ENCODE measurements at regions of chr2 and their contacts with region 1.

Region 1: GRCh38 chr2:157443795-157444640 is at the start of gene CYTIP:
- DNase-seq: peak; percentile 82
- ATAC-seq: peak; percentile 44
- H3K4me3 Mint-ChIP-seq: peak within 1 kb of the TSS; percentile 93
- H3K27ac Mint-ChIP-seq: peak within 1 kb of the TSS; percentile 95
- H3K4me1 Mint-ChIP-seq: peaks cover 40% of the 10 kb centered on the region
- H3K27me3 Mint-ChIP-seq: no peaks in the 10 kb centered on the region
- total RNA-seq, gene CYTIP: 470 to 536 TPM

Region 2: DNA sequence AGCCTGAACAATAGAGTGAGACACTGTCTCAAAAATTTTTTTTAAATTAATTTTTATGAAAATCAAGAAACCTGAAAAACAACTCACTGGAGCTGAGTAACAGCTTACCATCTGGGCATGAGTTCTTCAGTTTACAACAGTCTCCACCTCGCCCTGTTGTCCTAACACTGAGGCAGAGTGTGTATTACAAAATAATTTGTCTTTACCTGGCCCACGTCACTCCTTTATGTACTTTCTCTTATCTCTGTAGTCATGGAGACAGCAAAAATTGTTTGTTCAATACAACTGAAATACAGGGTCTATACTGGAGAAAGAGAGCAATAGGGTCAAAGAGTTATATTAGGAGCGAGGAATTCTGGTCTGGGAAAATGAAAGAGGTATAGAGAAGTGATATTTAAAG is 48.2 kb before region 1 on chr2:
- CTCF ChIA-PET with region 1: no interaction called
- POLR2A ChIA-PET with region 1: no interaction called
- intact Hi-C with region 1: no loop called
- DNase-seq: no peak
- ATAC-seq: no peak
- H3K4me3 Mint-ChIP-seq: no peak overlapping the region
- H3K27ac Mint-ChIP-seq: no peak overlapping the region
- H3K4me1 Mint-ChIP-seq: peaks cover 7% of the 10 kb centered on the region
- H3K27me3 Mint-ChIP-seq: no peaks in the 10 kb centered on the region

Region 3: DNA sequence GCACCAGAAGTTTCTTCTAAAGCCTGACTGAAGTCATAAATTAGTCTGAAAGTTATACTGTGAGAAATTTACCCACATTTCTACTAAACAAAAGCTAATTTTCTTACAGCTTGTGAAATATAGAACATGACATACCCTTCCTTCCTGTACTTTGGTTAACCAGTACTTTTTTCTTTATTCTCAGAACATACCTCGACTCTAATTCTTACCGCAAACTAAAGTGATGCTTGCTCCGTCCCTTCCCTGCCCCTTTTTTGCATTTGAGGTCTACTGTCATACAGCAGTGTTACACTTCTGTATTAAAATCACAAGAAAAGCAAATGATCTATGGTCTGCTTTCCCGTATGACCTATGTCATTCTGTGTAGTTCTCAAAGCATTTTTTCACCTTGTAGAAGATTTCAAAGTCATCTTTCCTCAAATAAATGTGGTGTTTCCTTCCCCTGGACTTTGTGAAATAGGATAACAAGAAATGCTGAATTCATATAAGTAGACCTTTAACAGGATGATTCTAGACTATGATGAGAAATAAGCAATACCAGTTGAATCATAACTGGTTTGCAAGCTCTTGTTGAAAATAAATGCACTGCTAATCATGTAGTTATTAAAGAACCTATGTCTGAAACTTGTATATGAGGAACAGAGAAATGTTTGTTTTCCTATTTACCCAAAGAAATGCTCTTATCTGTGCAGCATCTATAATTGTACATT is 30.5 kb before region 1 on chr2:
- CTCF ChIA-PET with region 1: interaction called, 32 read pairs
- POLR2A ChIA-PET with region 1: interaction called, 26 read pairs
- intact Hi-C with region 1: loop called (anchors 1 kb)
- DNase-seq: peak; percentile 64
- ATAC-seq: peak; percentile 67
- H3K4me3 Mint-ChIP-seq: peak overlapping the region; percentile 63
- H3K27ac Mint-ChIP-seq: peak overlapping the region; percentile 100
- H3K4me1 Mint-ChIP-seq: peaks cover 89% of the 10 kb centered on the region
- H3K27me3 Mint-ChIP-seq: no peaks in the 10 kb centered on the region

Region 4: GRCh38 chr2:157433394-157433793 is 10.6 kb before region 1 on chr2:
- CTCF ChIA-PET with region 1: interaction called, 5 read pairs
- POLR2A ChIA-PET with region 1: interaction called, 13 read pairs
- intact Hi-C with region 1: loop called (anchors 1 kb)
- DNase-seq: no peak
- ATAC-seq: no peak
- H3K4me3 Mint-ChIP-seq: peak overlapping the region; percentile 93
- H3K27ac Mint-ChIP-seq: peak overlapping the region; percentile 95
- H3K4me1 Mint-ChIP-seq: peaks cover 60% of the 10 kb centered on the region
- H3K27me3 Mint-ChIP-seq: no peaks in the 10 kb centered on the region

Region 5: GRCh38 chr2:157468931-157469708 is 25.1 kb after region 1 on chr2:
- CTCF ChIA-PET with region 1: interaction called, 31 read pairs
- POLR2A ChIA-PET with region 1: interaction called, 21 read pairs
- intact Hi-C with region 1: loop called (anchors 1 kb)
- DNase-seq: no peak
- ATAC-seq: peak; percentile 67
- H3K4me3 Mint-ChIP-seq: peak overlapping the region; percentile 68
- H3K27ac Mint-ChIP-seq: peak overlapping the region; percentile 94
- H3K4me1 Mint-ChIP-seq: peaks cover 95% of the 10 kb centered on the region
- H3K27me3 Mint-ChIP-seq: no peaks in the 10 kb centered on the region

Region 6: GRCh38 chr2:157492189-157492773 is 48.3 kb after region 1 on chr2:
- CTCF ChIA-PET with region 1: interaction called, 12 read pairs
- POLR2A ChIA-PET with region 1: interaction called, 8 read pairs
- intact Hi-C with region 1: no loop called
- DNase-seq: peak; percentile 84
- ATAC-seq: peak; percentile 90
- H3K4me3 Mint-ChIP-seq: no peak overlapping the region
- H3K27ac Mint-ChIP-seq: no peak overlapping the region
- H3K4me1 Mint-ChIP-seq: peaks cover 68% of the 10 kb centered on the region
- H3K27me3 Mint-ChIP-seq: no peaks in the 10 kb centered on the region

Measured in activated CD4-positive, alpha-beta T cell treated with anti-CD3 and anti-CD28 coated beads for 36 hours (primary cell).